ENCODE measurements at regions of chr2 and their contacts with region 1.

Region 1: DNA sequence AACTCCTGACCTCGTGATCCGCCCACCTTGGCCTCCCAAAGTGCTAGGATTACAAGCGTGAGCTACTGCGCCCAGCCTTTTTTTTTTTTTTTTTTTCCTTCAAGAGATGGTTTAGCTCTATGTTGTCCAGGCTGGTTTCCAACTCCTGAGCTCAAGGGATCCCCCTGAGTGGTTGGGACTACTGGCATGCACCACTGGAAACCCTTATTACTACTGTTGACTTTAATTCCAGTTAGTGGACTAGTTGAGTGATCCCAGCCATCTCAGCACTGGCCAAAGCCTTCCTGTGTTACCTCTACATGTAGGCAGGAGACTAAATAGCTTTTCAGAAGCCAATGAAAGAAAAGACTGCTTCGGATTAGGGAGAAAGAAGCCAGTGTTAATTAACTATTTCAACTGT is 8.1 kb upstream of the SSB start:
- DNase-seq: no peak
- ATAC-seq: no peak
- H3K4me3 Mint-ChIP-seq: no peak overlapping the region
- H3K27ac Mint-ChIP-seq: no peak overlapping the region
- H3K4me1 Mint-ChIP-seq: peaks cover 23% of the 10 kb centered on the region
- H3K27me3 Mint-ChIP-seq: peaks cover 3% of the 10 kb centered on the region; the same call in 1 of the 2 replicates
- CTCF ChIP-seq: no peak

Region 2: GRCh38 chr2:169897834-169898233 is 107.3 kb after region 1 on chr2:
- CTCF ChIA-PET with region 1: interaction called, 11 read pairs
- POLR2A ChIA-PET with region 1: no interaction called
- DNase-seq: no peak
- ATAC-seq: no peak
- H3K4me3 Mint-ChIP-seq: no peak overlapping the region
- H3K27ac Mint-ChIP-seq: no peak overlapping the region
- H3K4me1 Mint-ChIP-seq: 0 out of 2 replicates have a peak, but pooled peaks cover 4% of the 10 kb centered on the region
- H3K27me3 Mint-ChIP-seq: no peaks in the 10 kb centered on the region
- CTCF ChIP-seq: no peak